SK-N-SH (cell line): ENCODE measurements at regions of chr11 and their contacts with region 1.

Region 1: GRCh38 chr11:69704508-69705253 is 859 bp upstream of the FGF19 start:
- DNase-seq: peak; percentile 91
- H3K4me3 ChIP-seq: peak overlapping the region; percentile 31 to 41; a peak in 3 of 4 replicates
- H3K27ac ChIP-seq: no peak overlapping the region
- H3K4me1 ChIP-seq: peaks cover 0 to 13% of the 10 kb centered on the region in 2 experiments; a peak in 2 of 4 replicates
- H3K27me3 ChIP-seq: peaks cover 38% of the 10 kb centered on the region
- CTCF ChIP-seq: peak; percentile 68
- EP300 ChIP-seq: no peak
- RAD21 ChIP-seq: peak; percentile 73

Region 2: DNA sequence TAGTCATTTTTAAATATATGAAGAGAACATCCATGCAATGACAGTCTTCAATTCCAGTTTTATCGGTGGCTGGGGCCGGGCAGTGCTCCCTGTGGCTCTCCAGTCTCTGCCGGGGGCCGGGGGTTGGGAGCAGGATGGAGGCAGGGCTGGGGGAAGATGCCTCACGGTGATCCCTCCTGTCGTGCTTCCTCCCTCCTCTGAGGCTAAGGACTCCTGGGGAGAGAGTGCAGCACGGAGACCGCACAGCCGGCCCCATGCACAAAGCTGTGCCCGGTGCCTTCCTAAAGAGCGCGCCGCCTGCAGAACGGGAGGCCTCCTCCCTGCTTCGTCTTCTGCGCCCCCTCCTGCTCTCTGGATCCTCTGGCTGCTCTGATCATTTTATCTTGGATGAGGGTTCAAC is 999.8 kb before region 1 on chr11:
- CTCF ChIA-PET with region 1: no interaction called
- POLR2A ChIA-PET with region 1: no interaction called
- DNase-seq: no peak
- H3K4me3 ChIP-seq: no peak overlapping the region
- H3K27ac ChIP-seq: no peak overlapping the region
- H3K4me1 ChIP-seq: peaks cover 0 to 5% of the 10 kb centered on the region in 2 experiments; a peak in 1 of 4 replicates
- H3K27me3 ChIP-seq: no peaks in the 10 kb centered on the region
- CTCF ChIP-seq: no peak
- EP300 ChIP-seq: no peak
- RAD21 ChIP-seq: no peak

Region 3: DNA sequence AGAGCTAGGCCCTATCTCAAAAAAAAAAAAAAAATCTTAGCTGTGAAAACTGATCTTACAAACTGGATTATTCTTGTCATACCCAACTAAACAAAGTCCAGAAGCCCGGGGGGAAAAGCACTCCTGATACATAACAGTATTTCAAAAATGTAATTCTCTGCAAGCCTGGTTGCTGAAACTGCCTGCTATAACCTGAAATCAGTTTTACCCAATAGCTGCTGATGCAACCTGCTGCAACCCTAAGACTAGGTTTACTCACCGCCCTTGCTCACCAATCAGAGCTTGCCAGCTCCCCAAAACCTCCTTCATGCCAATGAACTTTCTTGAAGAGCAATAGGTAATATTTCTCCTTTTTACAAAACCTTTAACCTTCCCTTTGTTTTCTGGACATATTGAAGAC is 13.2 kb before region 1 on chr11:
- CTCF ChIA-PET with region 1: interaction called, 14 read pairs
- POLR2A ChIA-PET with region 1: no interaction called
- DNase-seq: no peak
- H3K4me3 ChIP-seq: no peak overlapping the region
- H3K27ac ChIP-seq: no peak overlapping the region
- H3K4me1 ChIP-seq: no peaks in the 10 kb centered on the region
- H3K27me3 ChIP-seq: peaks cover 6% of the 10 kb centered on the region; the same call in 1 of the 2 replicates
- CTCF ChIP-seq: no peak
- EP300 ChIP-seq: no peak
- RAD21 ChIP-seq: no peak

Region 4: GRCh38 chr11:69718147-69718546 is 13.5 kb after region 1 on chr11:
- CTCF ChIA-PET with region 1: interaction called, 23 read pairs
- POLR2A ChIA-PET with region 1: no interaction called
- DNase-seq: peak; percentile 73
- H3K4me3 ChIP-seq: no peak overlapping the region
- H3K27ac ChIP-seq: no peak overlapping the region
- H3K4me1 ChIP-seq: no peaks in the 10 kb centered on the region; a peak in 1 of 4 replicates
- H3K27me3 ChIP-seq: peaks cover 35% of the 10 kb centered on the region; the same call in 1 of the 2 replicates
- CTCF ChIP-seq: peak; percentile 58
- EP300 ChIP-seq: no peak
- RAD21 ChIP-seq: peak; percentile 39

Region 5: GRCh38 chr11:69801519-69802335 is 97.0 kb after region 1 on chr11:
- CTCF ChIA-PET with region 1: interaction called, 13 read pairs
- POLR2A ChIA-PET with region 1: no interaction called
- DNase-seq: peak; percentile 75
- H3K4me3 ChIP-seq: peak overlapping the region in 1 of 2 experiments; percentile 47; a peak in 1 of 4 replicates
- H3K27ac ChIP-seq: no peak overlapping the region
- H3K4me1 ChIP-seq: no peaks in the 10 kb centered on the region
- H3K27me3 ChIP-seq: no peaks in the 10 kb centered on the region
- CTCF ChIP-seq: peak; percentile 80
- EP300 ChIP-seq: no peak
- RAD21 ChIP-seq: peak; percentile 57